ENCODE measurements at regions of chr5 and their contacts with region 1.

Region 1: GRCh38 chr5:55994574-55995333 is at the start of gene IL6ST:
- DNase-seq: peak; percentile 98
- H3K4me3 ChIP-seq: peak within 1 kb of the TSS; percentile 85 to 96 (median 90)
- H3K27ac ChIP-seq: peak within 1 kb of the TSS; percentile 98 to 100 (median 98)
- H3K4me1 ChIP-seq: peaks cover 3 to 58% (median 38%) of the 10 kb centered on the region in 4 donors
- H3K27me3 ChIP-seq: no peaks in the 10 kb centered on the region
- CTCF ChIP-seq: peak in 2 of 5 experiments; percentile 27 to 28
- EP300 ChIP-seq: peak; percentile 73
- POLR2A ChIP-seq: peak; percentile 93
- total RNA-seq, gene IL6ST: 51.3 to 179 (median 136) TPM

Region 2: DNA sequence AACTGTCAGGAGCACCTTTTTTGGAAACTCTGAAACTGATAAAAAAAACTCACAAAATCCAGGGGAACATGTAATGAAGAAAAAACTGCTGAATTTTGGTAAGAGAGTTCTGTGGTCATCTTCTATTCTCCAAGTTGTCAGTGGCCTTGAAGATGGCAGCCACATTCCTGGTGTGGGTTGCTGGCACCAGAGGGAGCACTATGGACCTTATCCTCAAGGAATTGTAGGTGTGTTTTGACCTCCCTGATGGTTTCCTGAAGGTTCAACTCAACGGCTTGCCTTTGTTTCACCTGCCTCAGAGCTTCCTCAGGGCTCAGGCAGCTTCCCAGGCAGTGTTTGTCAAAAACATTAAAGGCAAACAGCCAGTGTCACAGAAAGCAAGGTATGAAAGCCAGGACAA is 280.4 kb before region 1 on chr5:
- in situ Hi-C with region 1: no loop called
- intact Hi-C with region 1: no loop called
- DNase-seq: peak; percentile 16
- H3K4me3 ChIP-seq: no peak overlapping the region
- H3K27ac ChIP-seq: peak overlapping the region in 3 of 4 donors; percentile 28 to 54 (median 40)
- H3K4me1 ChIP-seq: peaks cover 7 to 20% (median 13%) of the 10 kb centered on the region in 4 donors
- H3K27me3 ChIP-seq: no peaks in the 10 kb centered on the region
- CTCF ChIP-seq: peak in 1 of 5 experiments; percentile 9
- EP300 ChIP-seq: no peak
- POLR2A ChIP-seq: no peak

Region 3: GRCh38 chr5:56852228-56853000 is 857.7 kb after region 1 on chr5:
- in situ Hi-C with region 1: loop called in 1 of 4 experiments (anchors 25 kb)
- intact Hi-C with region 1: no loop called
- DNase-seq: no peak
- H3K4me3 ChIP-seq: no peak overlapping the region
- H3K27ac ChIP-seq: peak overlapping the region in 2 of 4 donors; percentile 17 to 27
- H3K4me1 ChIP-seq: peaks cover 6 to 94% (median 27%) of the 10 kb centered on the region in 4 donors
- H3K27me3 ChIP-seq: no peaks in the 10 kb centered on the region
- CTCF ChIP-seq: no peak
- EP300 ChIP-seq: no peak
- POLR2A ChIP-seq: no peak